MCF 10A (cell line): ENCODE measurements at regions of chr11 and their contacts with region 1.

Region 1: DNA sequence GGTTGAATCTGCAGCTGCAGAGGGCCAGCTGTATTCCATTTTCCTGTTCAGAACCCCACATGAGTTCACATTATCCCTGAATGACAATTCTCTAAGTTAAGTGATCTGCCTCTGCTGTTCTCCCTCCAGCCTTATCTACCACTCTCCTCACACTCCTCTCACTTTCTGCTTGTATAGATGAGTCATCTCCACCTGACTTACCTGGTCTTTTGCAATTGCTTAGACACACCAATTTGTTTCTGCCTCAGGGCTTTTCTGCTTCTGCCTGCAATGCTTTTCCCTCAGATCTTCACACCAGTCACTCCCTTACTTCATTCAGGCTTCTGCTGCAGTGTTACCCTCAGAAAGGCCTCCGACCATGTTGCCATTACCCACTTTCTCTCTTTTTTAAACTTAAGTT is 118.1 kb downstream of the ATM start:
- DNase-seq: peak; percentile 92
- H3K4me3 Mint-ChIP-seq: no peak overlapping the region
- H3K27ac Mint-ChIP-seq: peak overlapping the region; percentile 4
- H3K4me1 Mint-ChIP-seq: peaks cover 20% of the 10 kb centered on the region
- H3K27me3 Mint-ChIP-seq: no peaks in the 10 kb centered on the region
- CTCF ChIP-seq: no peak

Region 2: GRCh38 chr11:108239076-108239475 is 101.9 kb before region 1 on chr11:
- CTCF ChIA-PET with region 1: no interaction called
- POLR2A ChIA-PET with region 1: no interaction called
- intact Hi-C with region 1: no loop called
- DNase-seq: no peak
- H3K4me3 Mint-ChIP-seq: no peak overlapping the region
- H3K27ac Mint-ChIP-seq: no peak overlapping the region
- H3K4me1 Mint-ChIP-seq: peaks cover 7% of the 10 kb centered on the region
- H3K27me3 Mint-ChIP-seq: no peaks in the 10 kb centered on the region
- CTCF ChIP-seq: no peak

Region 3: GRCh38 chr11:110287537-110287936 is 1946.6 kb after region 1 on chr11:
- CTCF ChIA-PET with region 1: no interaction called
- POLR2A ChIA-PET with region 1: no interaction called
- intact Hi-C with region 1: loop called (anchors 10 kb)
- DNase-seq: no peak
- H3K4me3 Mint-ChIP-seq: no peak overlapping the region
- H3K27ac Mint-ChIP-seq: no peak overlapping the region
- H3K4me1 Mint-ChIP-seq: peaks cover 26% of the 10 kb centered on the region
- H3K27me3 Mint-ChIP-seq: no peaks in the 10 kb centered on the region
- CTCF ChIP-seq: no peak